CD4-positive, alpha-beta T cell (primary cell): ENCODE measurements at regions of chr18 and their contacts with region 1.

Region 1: DNA sequence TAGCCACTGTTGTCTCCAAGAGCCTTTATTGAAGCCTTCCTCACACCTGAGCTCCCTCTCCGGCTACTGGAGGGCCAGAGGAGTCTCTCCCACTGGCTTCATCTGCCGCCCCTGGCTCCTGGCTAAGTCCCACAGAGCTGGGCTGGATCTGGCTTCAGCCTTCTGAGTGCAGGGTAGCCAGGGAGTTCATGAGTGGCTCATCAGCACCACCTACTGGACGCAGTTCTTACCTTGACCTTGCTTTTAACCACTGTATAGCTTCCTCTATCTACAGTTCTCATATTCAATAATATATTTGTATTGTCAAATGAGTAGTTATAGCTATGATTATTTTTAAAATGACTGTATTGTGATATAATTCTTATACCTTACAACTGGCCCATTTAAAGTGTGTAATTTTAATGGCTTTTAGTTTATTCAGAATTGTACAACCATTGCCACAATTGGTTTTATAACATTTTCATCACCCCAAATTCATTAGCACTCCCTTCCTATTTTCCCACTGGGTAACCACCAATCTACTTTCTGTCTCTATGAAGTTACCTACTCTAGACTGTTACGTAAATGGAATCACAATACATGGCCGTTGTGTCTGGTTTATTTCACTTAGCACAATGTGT is 17.7 kb downstream of the CNDP1 start:
- DNase-seq: peak; percentile 61 to 89 (median 70)
- ATAC-seq: peak; percentile 94
- H3K4me3 ChIP-seq: no peak overlapping the region
- H3K4me3 Mint-ChIP-seq: no peak overlapping the region
- H3K27ac ChIP-seq: no peak overlapping the region
- H3K27ac Mint-ChIP-seq: no peak overlapping the region
- H3K4me1 ChIP-seq: no peaks in the 10 kb centered on the region
- H3K4me1 Mint-ChIP-seq: no peaks in the 10 kb centered on the region
- H3K27me3 ChIP-seq: no peaks in the 10 kb centered on the region
- H3K27me3 Mint-ChIP-seq: peaks cover 19% of the 10 kb centered on the region
- CTCF ChIP-seq: peak; percentile 85

Region 2: GRCh38 chr18:72762515-72763122 is 1789.4 kb before region 1 on chr18:
- CTCF ChIA-PET with region 1: no interaction called
- POLR2A ChIA-PET with region 1: no interaction called
- intact Hi-C with region 1: loop called (anchors 5 to 10 kb)
- DNase-seq: peak in 3 of 14 experiments; percentile 6 to 38 (median 23)
- ATAC-seq: no peak
- H3K4me3 ChIP-seq: no peak overlapping the region
- H3K4me3 Mint-ChIP-seq: no peak overlapping the region
- H3K27ac ChIP-seq: no peak overlapping the region
- H3K27ac Mint-ChIP-seq: no peak overlapping the region
- H3K4me1 ChIP-seq: no peaks in the 10 kb centered on the region
- H3K4me1 Mint-ChIP-seq: no peaks in the 10 kb centered on the region
- H3K27me3 ChIP-seq: no peaks in the 10 kb centered on the region
- H3K27me3 Mint-ChIP-seq: no peaks in the 10 kb centered on the region
- CTCF ChIP-seq: peak; percentile 64

Region 3: DNA sequence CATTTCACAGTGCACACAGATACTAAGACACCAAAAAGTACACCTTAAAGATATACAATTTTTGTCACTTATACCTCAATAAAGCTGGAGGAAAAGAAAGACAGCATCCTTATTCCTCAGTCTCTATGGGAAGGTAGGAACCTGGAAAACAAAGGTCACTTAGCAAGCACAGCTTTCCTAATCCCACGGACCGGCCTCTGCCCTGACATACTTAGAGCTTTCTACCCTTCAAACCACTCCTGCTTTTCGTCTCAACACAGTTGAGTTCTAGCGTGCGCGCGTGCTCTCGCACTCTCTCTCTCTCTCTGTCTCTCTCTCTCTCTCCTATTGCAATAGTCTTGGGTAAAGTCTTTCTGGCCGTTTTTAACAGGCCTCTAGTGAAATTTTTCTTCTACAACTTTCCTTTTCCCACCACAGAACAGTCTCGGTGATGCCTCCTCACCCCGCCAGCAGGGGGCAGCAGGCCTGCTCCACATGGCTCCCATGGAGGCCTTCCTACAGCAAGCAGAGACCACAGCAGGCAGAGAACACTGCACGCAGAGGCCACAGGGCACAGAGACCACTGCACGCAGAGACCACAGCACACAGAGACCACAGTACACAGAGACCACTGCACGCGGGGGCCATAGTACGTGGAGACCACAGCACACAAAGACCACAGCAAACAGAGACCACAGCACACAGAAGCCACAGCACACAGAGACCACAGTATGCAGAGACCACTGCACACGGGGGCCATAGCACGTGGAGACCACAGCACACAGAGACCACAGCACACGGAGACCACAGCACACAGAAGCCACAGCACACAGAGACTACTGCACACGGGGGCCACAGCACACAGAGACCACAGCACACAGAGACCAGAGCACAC is 511.4 kb before region 1 on chr18:
- CTCF ChIA-PET with region 1: no interaction called
- POLR2A ChIA-PET with region 1: no interaction called
- intact Hi-C with region 1: loop called in 1 of 2 experiments (anchors 5 kb)
- DNase-seq: peak; percentile 40 to 76 (median 50)
- ATAC-seq: peak; percentile 69
- H3K4me3 ChIP-seq: no peak overlapping the region
- H3K4me3 Mint-ChIP-seq: no peak overlapping the region
- H3K27ac ChIP-seq: no peak overlapping the region
- H3K27ac Mint-ChIP-seq: no peak overlapping the region
- H3K4me1 ChIP-seq: no peaks in the 10 kb centered on the region
- H3K4me1 Mint-ChIP-seq: no peaks in the 10 kb centered on the region
- H3K27me3 ChIP-seq: peaks cover 0 to 3% of the 10 kb centered on the region in 2 experiments
- H3K27me3 Mint-ChIP-seq: no peaks in the 10 kb centered on the region
- CTCF ChIP-seq: peak; percentile 52

Region 4: GRCh38 chr18:74196220-74197119 is 355.6 kb before region 1 on chr18:
- CTCF ChIA-PET with region 1: interaction called, 13 read pairs
- POLR2A ChIA-PET with region 1: no interaction called
- intact Hi-C with region 1: loop called (anchors 1 kb)
- DNase-seq: peak in 13 of 14 experiments; percentile 18 to 86 (median 36)
- ATAC-seq: peak; percentile 96
- H3K4me3 ChIP-seq: peak overlapping the region; percentile 50
- H3K4me3 Mint-ChIP-seq: peak overlapping the region; percentile 83
- H3K27ac ChIP-seq: peak overlapping the region in 1 of 2 donors; percentile 27
- H3K27ac Mint-ChIP-seq: peak overlapping the region; percentile 57
- H3K4me1 ChIP-seq: no peaks in the 10 kb centered on the region
- H3K4me1 Mint-ChIP-seq: no peaks in the 10 kb centered on the region
- H3K27me3 ChIP-seq: peaks cover 0 to 2% of the 10 kb centered on the region in 2 experiments
- H3K27me3 Mint-ChIP-seq: peaks cover 13% of the 10 kb centered on the region
- CTCF ChIP-seq: peak; percentile 99

Region 5: GRCh38 chr18:74310411-74310810 is 241.6 kb before region 1 on chr18:
- CTCF ChIA-PET with region 1: no interaction called
- POLR2A ChIA-PET with region 1: no interaction called
- intact Hi-C with region 1: loop called in 1 of 2 experiments (anchors 5 kb)
- DNase-seq: peak in 3 of 14 experiments; percentile 13 to 59 (median 58)
- ATAC-seq: peak; percentile 83
- H3K4me3 ChIP-seq: no peak overlapping the region
- H3K4me3 Mint-ChIP-seq: no peak overlapping the region
- H3K27ac ChIP-seq: no peak overlapping the region
- H3K27ac Mint-ChIP-seq: no peak overlapping the region
- H3K4me1 ChIP-seq: peaks cover 3% of the 10 kb centered on the region
- H3K4me1 Mint-ChIP-seq: peaks cover 5% of the 10 kb centered on the region
- H3K27me3 ChIP-seq: no peaks in the 10 kb centered on the region
- H3K27me3 Mint-ChIP-seq: peaks cover 36% of the 10 kb centered on the region
- CTCF ChIP-seq: peak; percentile 55

Region 6: DNA sequence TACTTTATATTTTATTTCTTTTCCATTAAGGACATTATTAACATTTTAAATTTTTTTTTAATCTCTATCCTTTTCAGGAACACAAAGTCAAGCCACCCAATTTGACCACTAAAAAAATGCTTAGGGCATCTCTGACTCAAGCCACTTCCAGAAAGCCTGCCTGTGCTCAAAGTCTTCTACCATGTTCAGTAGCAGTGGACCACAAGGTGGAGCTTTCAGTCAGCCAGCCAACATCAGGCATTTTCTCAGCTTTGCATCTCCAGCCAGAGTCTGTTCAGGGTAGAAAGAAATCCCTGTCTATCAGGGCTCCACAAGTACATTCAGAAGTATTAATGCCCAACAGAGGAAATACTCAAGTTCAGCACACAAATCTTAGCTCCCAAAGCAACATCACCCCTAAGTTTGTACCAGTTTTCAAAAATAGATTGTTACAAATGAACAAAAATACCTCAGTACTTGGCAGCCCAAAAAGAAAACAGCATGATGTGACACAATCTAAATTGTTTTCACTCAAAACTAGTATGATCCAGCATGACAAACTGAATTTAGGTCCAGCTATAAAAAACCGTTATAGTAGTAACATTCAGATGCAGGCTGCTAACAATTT is 198.8 kb before region 1 on chr18:
- CTCF ChIA-PET with region 1: interaction called, 4 read pairs
- POLR2A ChIA-PET with region 1: interaction called, 6 read pairs
- intact Hi-C with region 1: loop called (anchors 1 kb)
- DNase-seq: peak; percentile 35 to 85 (median 52)
- ATAC-seq: peak; percentile 88
- H3K4me3 ChIP-seq: no peak overlapping the region
- H3K4me3 Mint-ChIP-seq: no peak overlapping the region
- H3K27ac ChIP-seq: no peak overlapping the region
- H3K27ac Mint-ChIP-seq: no peak overlapping the region
- H3K4me1 ChIP-seq: peaks cover 2% of the 10 kb centered on the region
- H3K4me1 Mint-ChIP-seq: peaks cover 5% of the 10 kb centered on the region
- H3K27me3 ChIP-seq: no peaks in the 10 kb centered on the region
- H3K27me3 Mint-ChIP-seq: no peaks in the 10 kb centered on the region
- CTCF ChIP-seq: peak; percentile 85

Region 7: DNA sequence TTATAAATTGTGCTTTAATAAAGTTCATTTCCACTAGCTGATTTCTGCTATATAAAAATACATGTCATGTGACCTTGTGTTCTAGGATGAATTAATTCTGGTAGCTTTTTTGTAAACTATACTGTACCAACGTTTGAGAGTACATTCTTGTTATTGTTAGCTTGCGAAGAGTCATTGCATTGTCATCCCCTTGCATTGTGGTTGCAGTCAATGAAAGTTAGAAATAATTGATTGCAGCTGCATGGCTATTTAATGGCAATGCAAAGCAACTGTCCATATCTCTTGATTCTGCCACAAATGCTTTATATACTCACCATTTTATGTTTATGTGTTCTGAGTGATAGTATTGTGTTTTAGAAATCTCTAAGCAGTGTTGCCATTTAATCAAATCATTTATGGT is 137.2 kb after region 1 on chr18:
- CTCF ChIA-PET with region 1: no interaction called
- POLR2A ChIA-PET with region 1: no interaction called
- intact Hi-C with region 1: no loop called
- DNase-seq: no peak
- ATAC-seq: no peak
- H3K4me3 ChIP-seq: no peak overlapping the region
- H3K4me3 Mint-ChIP-seq: no peak overlapping the region
- H3K27ac ChIP-seq: no peak overlapping the region
- H3K27ac Mint-ChIP-seq: no peak overlapping the region
- H3K4me1 ChIP-seq: peaks cover 12% of the 10 kb centered on the region
- H3K4me1 Mint-ChIP-seq: peaks cover 27% of the 10 kb centered on the region
- H3K27me3 ChIP-seq: no peaks in the 10 kb centered on the region
- H3K27me3 Mint-ChIP-seq: no peaks in the 10 kb centered on the region
- CTCF ChIP-seq: no peak

Region 8: GRCh38 chr18:75429975-75430374 is 877.9 kb after region 1 on chr18:
- CTCF ChIA-PET with region 1: no interaction called
- POLR2A ChIA-PET with region 1: no interaction called
- intact Hi-C with region 1: no loop called
- DNase-seq: no peak
- ATAC-seq: no peak
- H3K4me3 ChIP-seq: no peak overlapping the region
- H3K4me3 Mint-ChIP-seq: no peak overlapping the region
- H3K27ac ChIP-seq: no peak overlapping the region
- H3K27ac Mint-ChIP-seq: no peak overlapping the region
- H3K4me1 ChIP-seq: no peaks in the 10 kb centered on the region
- H3K4me1 Mint-ChIP-seq: no peaks in the 10 kb centered on the region
- H3K27me3 ChIP-seq: peaks cover 7 to 12% of the 10 kb centered on the region in 2 experiments
- H3K27me3 Mint-ChIP-seq: peaks cover 19% of the 10 kb centered on the region
- CTCF ChIP-seq: no peak